ENCODE measurements at regions of chr17 and their contacts with region 1.

Region 1: GRCh38 chr17:63974594-63975192 is 2.0 kb upstream of the SCN4A start:
- DNase-seq: no peak
- H3K4me3 Mint-ChIP-seq: no peak overlapping the region
- H3K27ac Mint-ChIP-seq: no peak overlapping the region
- H3K4me1 Mint-ChIP-seq: peaks cover 12% of the 10 kb centered on the region
- H3K27me3 Mint-ChIP-seq: no peaks in the 10 kb centered on the region

Region 2: DNA sequence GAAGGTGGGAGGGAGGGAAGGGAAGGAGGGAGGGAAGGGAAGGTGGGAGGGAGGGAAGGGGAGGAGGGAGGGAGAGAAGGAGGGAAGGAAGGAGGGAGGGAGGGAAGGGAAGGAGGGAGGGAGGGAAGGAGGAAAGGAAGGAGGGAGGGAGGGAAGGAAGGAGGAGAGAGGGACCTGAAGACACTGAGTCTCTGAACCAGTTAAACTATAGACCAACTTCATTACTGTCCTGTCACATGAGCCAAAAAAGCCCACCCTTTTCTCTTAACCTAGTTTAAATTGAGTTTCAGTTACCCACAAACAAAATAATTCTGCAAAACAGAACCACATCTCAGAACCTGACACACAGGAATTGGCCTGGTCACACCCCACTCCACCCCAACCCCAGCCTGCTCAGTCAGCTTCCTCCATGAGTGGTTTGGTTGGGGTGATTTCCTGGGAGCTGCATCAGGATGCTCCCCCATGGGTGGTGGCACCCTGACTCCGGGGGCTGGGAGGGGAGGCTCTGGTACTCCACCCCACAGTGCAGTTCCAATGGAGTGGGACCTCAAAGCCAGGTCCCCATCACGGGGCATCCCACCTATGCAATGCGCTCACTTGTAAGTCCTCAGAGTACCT is 18.8 kb after region 1 on chr17:
- CTCF ChIA-PET with region 1: interaction called, 10 read pairs
- intact Hi-C with region 1: no loop called
- DNase-seq: no peak
- H3K4me3 Mint-ChIP-seq: no peak overlapping the region
- H3K27ac Mint-ChIP-seq: no peak overlapping the region
- H3K4me1 Mint-ChIP-seq: peaks cover 29% of the 10 kb centered on the region
- H3K27me3 Mint-ChIP-seq: no peaks in the 10 kb centered on the region

Region 3: GRCh38 chr17:64155751-64156544 is 181.3 kb after region 1 on chr17:
- CTCF ChIA-PET with region 1: no interaction called
- intact Hi-C with region 1: no loop called
- DNase-seq: no peak
- H3K4me3 Mint-ChIP-seq: no peak overlapping the region
- H3K27ac Mint-ChIP-seq: no peak overlapping the region
- H3K4me1 Mint-ChIP-seq: no peaks in the 10 kb centered on the region
- H3K27me3 Mint-ChIP-seq: no peaks in the 10 kb centered on the region

Measured in activated naive CD4-positive, alpha-beta T cell treated with anti-CD3 and anti-CD28 coated beads for 36 hours (primary cell).